CD8-positive, alpha-beta T cell (primary cell): ENCODE measurements at regions of chr12 and their contacts with region 1.

Region 1: GRCh38 chr12:124036674-124037109 is 63.7 kb downstream of the ZNF664 start:
- DNase-seq: peak in 7 of 9 experiments; percentile 20 to 69 (median 52)
- ATAC-seq: no peak
- H3K4me3 ChIP-seq: no peak overlapping the region
- H3K4me3 Mint-ChIP-seq: no peak overlapping the region
- H3K27ac ChIP-seq: no peak overlapping the region
- H3K27ac Mint-ChIP-seq: no peak overlapping the region
- H3K4me1 ChIP-seq: no peaks in the 10 kb centered on the region
- H3K4me1 Mint-ChIP-seq: no peaks in the 10 kb centered on the region
- H3K27me3 ChIP-seq: no peaks in the 10 kb centered on the region
- H3K27me3 Mint-ChIP-seq: no peaks in the 10 kb centered on the region
- CTCF ChIP-seq: peak; percentile 99

Region 2: DNA sequence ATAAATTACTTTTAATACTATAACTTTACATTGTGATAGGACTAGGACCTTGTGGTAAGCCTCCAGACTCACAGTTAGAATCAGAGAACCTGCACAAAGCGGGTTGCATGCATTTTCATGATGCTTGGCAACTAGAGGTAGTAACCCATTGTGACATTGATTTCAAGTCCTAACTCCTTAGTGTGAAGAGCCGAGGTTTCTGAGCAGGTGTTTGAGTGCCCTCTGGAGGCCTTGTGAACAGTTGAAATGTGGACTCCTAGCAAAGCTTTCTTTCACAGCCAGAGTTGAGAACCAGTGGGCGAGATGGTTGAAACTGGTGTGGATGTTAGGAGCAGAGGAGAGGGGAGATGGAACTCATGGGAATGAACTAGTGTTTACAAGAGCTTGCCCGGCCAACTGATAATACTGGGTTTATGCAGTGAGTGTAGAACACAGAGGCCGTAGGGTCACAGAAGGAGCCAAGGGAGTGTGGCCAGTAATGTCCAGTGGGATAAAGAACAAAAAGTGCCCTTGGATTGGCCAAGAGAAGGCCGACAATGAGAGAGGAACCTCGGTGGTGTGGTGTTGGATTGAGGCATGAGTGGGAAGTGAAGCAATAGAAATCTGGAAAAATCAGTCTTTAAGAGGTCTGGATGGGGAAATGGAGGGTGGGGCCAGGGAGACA is 52.7 kb before region 1 on chr12:
- CTCF ChIA-PET with region 1: no interaction called
- POLR2A ChIA-PET with region 1: no interaction called
- intact Hi-C with region 1: no loop called
- DNase-seq: peak in 8 of 9 experiments; percentile 23 to 80 (median 54)
- ATAC-seq: peak; percentile 75
- H3K4me3 ChIP-seq: no peak overlapping the region
- H3K4me3 Mint-ChIP-seq: no peak overlapping the region
- H3K27ac ChIP-seq: no peak overlapping the region
- H3K27ac Mint-ChIP-seq: no peak overlapping the region
- H3K4me1 ChIP-seq: no peaks in the 10 kb centered on the region
- H3K4me1 Mint-ChIP-seq: peaks cover 17% of the 10 kb centered on the region
- H3K27me3 ChIP-seq: no peaks in the 10 kb centered on the region
- H3K27me3 Mint-ChIP-seq: no peaks in the 10 kb centered on the region
- CTCF ChIP-seq: peak; percentile 73

Region 3: DNA sequence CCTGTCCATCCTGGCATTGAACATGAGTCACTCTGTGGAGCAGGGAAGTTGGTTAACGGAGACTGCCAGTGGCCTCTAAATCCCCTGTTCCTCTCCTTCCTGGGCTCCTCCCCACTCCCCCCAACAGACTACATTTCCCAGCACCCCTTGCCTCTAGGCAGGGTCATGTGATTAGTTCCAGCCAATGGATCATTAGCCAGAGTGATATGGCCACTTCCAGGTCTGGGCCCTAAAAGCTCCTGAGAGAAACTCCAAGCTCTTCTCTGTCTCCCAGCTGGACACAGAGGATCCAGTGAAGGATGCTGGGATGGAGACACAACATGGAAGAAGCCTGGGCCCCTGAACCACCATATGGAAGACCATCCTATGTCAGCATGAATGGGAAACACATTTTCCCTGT is 203.8 kb after region 1 on chr12:
- CTCF ChIA-PET with region 1: no interaction called
- POLR2A ChIA-PET with region 1: no interaction called
- intact Hi-C with region 1: no loop called
- DNase-seq: no peak
- ATAC-seq: no peak
- H3K4me3 ChIP-seq: no peak overlapping the region
- H3K4me3 Mint-ChIP-seq: no peak overlapping the region
- H3K27ac ChIP-seq: no peak overlapping the region
- H3K27ac Mint-ChIP-seq: no peak overlapping the region
- H3K4me1 ChIP-seq: no peaks in the 10 kb centered on the region
- H3K4me1 Mint-ChIP-seq: no peaks in the 10 kb centered on the region
- H3K27me3 ChIP-seq: no peaks in the 10 kb centered on the region
- H3K27me3 Mint-ChIP-seq: peaks cover 11% of the 10 kb centered on the region
- CTCF ChIP-seq: no peak

Region 4: GRCh38 chr12:124321040-124321481 is 284.4 kb after region 1 on chr12:
- CTCF ChIA-PET with region 1: interaction called, 6 read pairs
- POLR2A ChIA-PET with region 1: no interaction called
- intact Hi-C with region 1: loop called (anchors 1 to 2 kb)
- DNase-seq: peak; percentile 22 to 69 (median 54)
- ATAC-seq: peak; percentile 87
- H3K4me3 ChIP-seq: no peak overlapping the region
- H3K4me3 Mint-ChIP-seq: no peak overlapping the region
- H3K27ac ChIP-seq: no peak overlapping the region
- H3K27ac Mint-ChIP-seq: no peak overlapping the region
- H3K4me1 ChIP-seq: no peaks in the 10 kb centered on the region
- H3K4me1 Mint-ChIP-seq: no peaks in the 10 kb centered on the region
- H3K27me3 ChIP-seq: no peaks in the 10 kb centered on the region
- H3K27me3 Mint-ChIP-seq: no peaks in the 10 kb centered on the region
- CTCF ChIP-seq: peak; percentile 69

Region 5: GRCh38 chr12:124898200-124898922 is 861.7 kb after region 1 on chr12:
- CTCF ChIA-PET with region 1: interaction called, 3 read pairs
- POLR2A ChIA-PET with region 1: no interaction called
- intact Hi-C with region 1: loop called in 1 of 2 experiments (anchors 1 kb)
- DNase-seq: peak; percentile 43 to 89 (median 70)
- ATAC-seq: peak; percentile 99
- H3K4me3 ChIP-seq: no peak overlapping the region
- H3K4me3 Mint-ChIP-seq: peak overlapping the region; percentile 12
- H3K27ac ChIP-seq: no peak overlapping the region
- H3K27ac Mint-ChIP-seq: no peak overlapping the region
- H3K4me1 ChIP-seq: peaks cover 8% of the 10 kb centered on the region
- H3K4me1 Mint-ChIP-seq: peaks cover 12% of the 10 kb centered on the region
- H3K27me3 ChIP-seq: no peaks in the 10 kb centered on the region
- H3K27me3 Mint-ChIP-seq: no peaks in the 10 kb centered on the region
- CTCF ChIP-seq: peak; percentile 78